Activated CD4-positive, alpha-beta T cell treated with anti-CD3 and anti-CD28 coated beads, Interleukin-2, amount 10 ng/mL, durations not matched to agents 24 days and 14 days (primary cell): ENCODE measurements at regions of chr3 and their contacts with region 1.

Region 1: GRCh38 chr3:4850928-4851265 is 128.3 kb upstream of the BHLHE40 start:
- DNase-seq: peak; percentile 87
- H3K4me3 Mint-ChIP-seq: peak overlapping the region; percentile 72
- H3K27ac Mint-ChIP-seq: peak overlapping the region; percentile 99
- H3K4me1 Mint-ChIP-seq: peaks cover 77% of the 10 kb centered on the region
- H3K27me3 Mint-ChIP-seq: no peaks in the 10 kb centered on the region

Region 2: DNA sequence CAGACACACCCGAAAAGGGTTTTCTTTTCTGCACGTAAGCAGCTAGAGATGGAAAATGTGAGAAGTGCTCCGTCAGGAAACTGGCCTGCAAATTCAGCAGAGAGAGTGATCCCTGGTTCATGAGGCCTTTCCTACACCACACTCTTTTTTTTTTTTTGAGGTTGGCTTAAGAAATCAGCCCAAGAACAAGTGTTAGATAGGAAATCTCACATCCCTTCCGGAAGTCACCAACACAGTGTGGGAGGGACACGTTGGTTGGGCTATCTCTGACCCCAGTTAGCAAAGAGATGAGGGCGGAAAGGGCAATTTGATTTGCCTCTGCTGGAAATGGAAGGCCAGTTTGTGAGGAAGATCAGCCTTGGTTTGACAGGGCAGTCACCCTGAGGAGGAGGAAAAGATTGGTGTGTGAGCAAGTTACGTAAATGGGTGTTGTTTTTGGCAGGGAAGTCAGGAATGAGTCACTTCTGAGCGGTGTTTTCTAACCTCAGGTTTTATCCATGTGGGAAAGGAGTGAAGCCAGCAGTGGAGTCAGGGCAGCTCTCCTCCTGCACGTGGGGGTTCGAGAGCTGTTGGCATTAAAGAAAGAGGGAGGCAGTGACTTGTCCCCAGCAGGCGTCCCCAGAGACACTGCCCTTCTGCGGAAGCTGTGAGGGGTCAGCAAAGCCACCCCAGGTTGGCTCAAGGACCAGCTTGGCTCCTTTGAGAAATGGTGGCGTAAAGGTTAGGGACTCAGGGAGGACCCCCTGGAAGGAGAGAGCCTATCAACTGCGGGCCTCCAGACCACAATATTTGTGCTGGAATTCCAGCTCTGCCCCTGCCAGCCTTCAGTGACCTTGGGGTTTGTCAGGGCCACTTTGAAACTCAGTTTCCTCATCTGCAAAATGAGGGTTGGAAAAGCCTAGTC is 109.2 kb before region 1 on chr3:
- intact Hi-C with region 1: loop called (anchors 1 kb)
- DNase-seq: peak; percentile 71
- H3K4me3 Mint-ChIP-seq: peak overlapping the region; percentile 47
- H3K27ac Mint-ChIP-seq: peak overlapping the region; percentile 89
- H3K4me1 Mint-ChIP-seq: peaks cover 66% of the 10 kb centered on the region
- H3K27me3 Mint-ChIP-seq: no peaks in the 10 kb centered on the region

Region 3: DNA sequence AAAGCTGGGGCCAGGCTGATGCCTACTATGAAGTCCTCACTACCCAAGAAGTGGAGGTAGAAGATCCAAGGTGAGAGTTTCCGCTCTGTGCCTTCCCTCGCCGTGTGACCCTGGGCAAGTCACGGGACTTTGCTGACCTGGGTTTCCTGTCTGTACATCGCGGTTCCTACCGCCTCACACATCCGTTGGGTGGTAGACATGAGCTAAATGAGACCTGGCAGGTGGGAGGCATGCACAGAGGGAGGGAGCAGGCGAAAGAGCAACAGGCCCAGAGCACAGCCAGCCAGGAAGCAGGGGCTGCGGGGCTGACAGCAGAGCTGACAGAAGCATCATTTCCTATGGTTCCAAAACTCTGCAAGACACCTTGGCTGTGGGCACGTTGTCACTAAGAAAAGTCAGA is 28.9 kb before region 1 on chr3:
- intact Hi-C with region 1: loop called (anchors 1 kb)
- DNase-seq: peak; percentile 93
- H3K4me3 Mint-ChIP-seq: peak overlapping the region; percentile 75
- H3K27ac Mint-ChIP-seq: peak overlapping the region; percentile 97
- H3K4me1 Mint-ChIP-seq: peaks cover 84% of the 10 kb centered on the region
- H3K27me3 Mint-ChIP-seq: no peaks in the 10 kb centered on the region

Region 4: GRCh38 chr3:4888913-4889846 is 38.3 kb after region 1 on chr3:
- intact Hi-C with region 1: loop called (anchors 1 kb)
- DNase-seq: peak; percentile 87
- H3K4me3 Mint-ChIP-seq: peak overlapping the region; percentile 49
- H3K27ac Mint-ChIP-seq: peak overlapping the region; percentile 89
- H3K4me1 Mint-ChIP-seq: peaks cover 44% of the 10 kb centered on the region
- H3K27me3 Mint-ChIP-seq: no peaks in the 10 kb centered on the region

Region 5: DNA sequence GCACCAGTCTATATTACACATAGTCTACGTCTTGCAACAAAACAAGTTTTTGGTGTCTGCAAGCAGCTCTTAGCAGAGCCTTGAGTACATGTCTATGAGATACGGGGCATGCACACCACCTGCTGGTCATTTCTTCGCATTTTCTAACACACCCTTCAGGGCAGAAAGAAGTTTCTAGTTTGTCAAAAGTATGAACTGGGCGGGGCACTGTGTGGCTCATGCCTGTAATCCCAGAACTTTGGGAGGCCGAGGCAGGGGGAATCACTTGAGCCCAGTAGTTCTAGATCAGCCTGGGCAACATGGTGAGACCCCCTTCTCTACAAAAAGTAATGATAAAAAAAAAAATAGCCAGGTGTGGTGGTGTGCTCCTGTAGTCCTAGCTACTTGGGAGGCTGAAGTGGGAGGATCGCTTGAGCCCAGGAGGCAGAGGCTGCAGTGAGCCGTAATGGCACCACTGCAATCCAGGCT is 207.0 kb after region 1 on chr3:
- intact Hi-C with region 1: loop called (anchors 5 kb)
- DNase-seq: peak; percentile 93
- H3K4me3 Mint-ChIP-seq: peak overlapping the region; percentile 29
- H3K27ac Mint-ChIP-seq: no peak overlapping the region
- H3K4me1 Mint-ChIP-seq: peaks cover 36% of the 10 kb centered on the region
- H3K27me3 Mint-ChIP-seq: peaks cover 7% of the 10 kb centered on the region